Esophagus muscularis mucosa (tissue), 4 donors: ENCODE measurements at regions of chr7 and their contacts with region 1.

Region 1: DNA sequence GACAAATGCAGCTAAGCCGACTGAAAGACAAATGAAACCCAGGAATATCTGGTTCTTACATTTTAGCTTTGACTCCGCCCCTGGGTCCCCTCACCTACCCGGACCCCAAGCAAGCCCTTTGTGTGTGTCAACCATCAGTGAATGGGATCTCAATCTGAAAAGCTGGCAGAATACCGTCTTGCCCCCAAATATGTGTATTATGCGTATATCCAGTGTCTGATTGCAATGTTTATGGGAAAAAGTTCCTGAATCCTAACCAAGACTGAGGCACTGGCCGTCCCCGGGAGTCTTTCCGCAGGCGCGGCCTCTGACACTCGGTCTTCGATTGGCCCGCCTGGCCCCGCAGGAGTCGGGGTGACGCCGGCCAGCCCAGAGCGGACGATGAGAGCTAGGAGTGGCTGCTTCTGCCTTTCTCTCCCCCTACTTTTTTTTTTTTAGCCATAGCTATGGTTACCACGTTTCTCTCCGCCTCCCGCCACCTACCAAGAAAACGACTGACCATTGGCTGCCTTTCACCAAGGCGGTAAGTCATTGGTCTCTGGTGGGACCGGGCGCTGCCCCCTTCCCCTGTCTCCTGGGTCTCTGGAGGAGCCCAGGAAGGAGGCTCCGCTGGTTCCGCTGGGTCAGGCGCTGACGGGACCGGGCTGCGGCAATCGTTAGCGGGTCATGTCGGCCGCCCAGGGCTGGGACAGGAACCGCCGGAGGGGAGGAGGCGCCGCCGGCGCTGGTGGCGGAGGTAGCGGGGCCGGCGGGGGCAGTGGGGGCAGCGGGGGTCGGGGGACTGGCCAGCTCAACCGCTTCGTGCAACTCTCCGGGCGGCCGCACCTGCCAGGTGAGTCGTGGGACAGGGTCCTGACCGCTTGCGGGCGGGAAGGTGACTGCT is at the start of gene KLHDC10:
- DNase-seq: peak; percentile 99
- H3K4me3 ChIP-seq: peak within 1 kb of the TSS; percentile 76 to 99 (median 98)
- H3K27ac ChIP-seq: peak within 1 kb of the TSS; percentile 85 to 91 (median 89)
- H3K4me1 ChIP-seq: peaks cover 20 to 48% (median 42%) of the 10 kb centered on the region in 4 donors
- H3K27me3 ChIP-seq: no peaks in the 10 kb centered on the region
- CTCF ChIP-seq: peak in 1 of 3 experiments; percentile 38
- EP300 ChIP-seq: no peak
- POLR2A ChIP-seq: no peak
- total RNA-seq, gene KLHDC10: 19.1 to 23.6 (median 19.9) TPM

Region 2: DNA sequence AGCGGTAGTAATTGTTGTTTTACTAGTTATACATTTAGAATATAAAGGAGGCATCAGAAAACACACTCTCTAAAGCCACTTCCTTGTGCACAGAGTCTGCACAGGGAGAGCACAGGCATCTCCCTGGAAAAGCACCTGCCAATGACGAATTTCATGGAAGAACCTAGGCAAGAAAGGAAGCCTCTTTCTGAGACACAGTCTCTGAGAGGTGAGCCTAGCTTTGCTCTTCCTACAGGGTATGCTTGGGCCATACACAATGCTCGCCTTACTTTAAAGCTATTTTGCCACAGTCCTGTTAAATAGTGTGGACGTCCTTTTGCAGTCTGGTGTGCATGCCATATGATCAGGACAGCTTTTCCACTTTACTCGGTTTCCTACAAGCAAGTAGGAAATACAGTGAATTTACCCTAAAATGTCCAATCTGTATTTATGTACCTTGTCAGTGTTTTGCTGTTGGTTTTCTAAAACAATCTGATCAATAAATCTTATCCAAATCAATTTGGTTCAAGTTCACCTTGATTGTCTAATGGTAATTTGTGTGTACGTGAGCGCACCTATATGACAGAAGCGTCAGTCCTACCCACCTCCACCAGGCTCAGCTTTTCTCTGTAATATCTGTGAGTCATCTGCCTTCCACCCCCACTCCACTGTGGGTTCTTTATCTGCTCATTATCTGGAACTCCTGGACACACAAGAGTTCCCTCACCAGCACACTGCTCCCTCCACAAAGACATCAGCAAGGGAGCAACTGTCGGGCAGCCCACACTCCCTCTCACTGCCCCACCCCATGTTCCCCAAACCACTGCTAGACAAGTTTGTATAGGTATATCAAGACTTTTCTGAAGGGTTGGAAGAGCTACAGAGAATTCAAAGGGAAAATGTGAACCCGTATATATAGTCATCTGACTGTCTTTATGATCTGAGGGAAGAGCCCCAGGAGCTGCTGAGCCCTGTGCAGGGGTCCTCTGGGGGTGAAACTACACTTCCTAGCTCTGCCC is 65.3 kb after region 1 on chr7:
- intact Hi-C with region 1: no loop called
- DNase-seq: no peak
- H3K4me3 ChIP-seq: no peak overlapping the region
- H3K27ac ChIP-seq: no peak overlapping the region
- H3K4me1 ChIP-seq: peaks cover 0 to 5% (median 1%) of the 10 kb centered on the region in 4 donors
- H3K27me3 ChIP-seq: no peaks in the 10 kb centered on the region
- CTCF ChIP-seq: no peak
- EP300 ChIP-seq: no peak
- POLR2A ChIP-seq: no peak

Region 3: GRCh38 chr7:130440527-130441365 is 370.5 kb after region 1 on chr7 and contains the start of gene CEP41:
- intact Hi-C with region 1: loop called (anchors 5 kb)
- DNase-seq: peak; percentile 98
- H3K4me3 ChIP-seq: peak within 1 kb of the TSS; percentile 78 to 89 (median 80)
- H3K27ac ChIP-seq: peak within 1 kb of the TSS; percentile 81 to 87 (median 86)
- H3K4me1 ChIP-seq: peaks cover 7 to 19% (median 15%) of the 10 kb centered on the region in 4 donors
- H3K27me3 ChIP-seq: peaks cover 0 to 5% (median 0%) of the 10 kb centered on the region in 4 donors
- CTCF ChIP-seq: no peak
- EP300 ChIP-seq: no peak
- POLR2A ChIP-seq: no peak
- total RNA-seq, gene CEP41: 0.83 to 5.9 (median 2.8) TPM

Region 4: DNA sequence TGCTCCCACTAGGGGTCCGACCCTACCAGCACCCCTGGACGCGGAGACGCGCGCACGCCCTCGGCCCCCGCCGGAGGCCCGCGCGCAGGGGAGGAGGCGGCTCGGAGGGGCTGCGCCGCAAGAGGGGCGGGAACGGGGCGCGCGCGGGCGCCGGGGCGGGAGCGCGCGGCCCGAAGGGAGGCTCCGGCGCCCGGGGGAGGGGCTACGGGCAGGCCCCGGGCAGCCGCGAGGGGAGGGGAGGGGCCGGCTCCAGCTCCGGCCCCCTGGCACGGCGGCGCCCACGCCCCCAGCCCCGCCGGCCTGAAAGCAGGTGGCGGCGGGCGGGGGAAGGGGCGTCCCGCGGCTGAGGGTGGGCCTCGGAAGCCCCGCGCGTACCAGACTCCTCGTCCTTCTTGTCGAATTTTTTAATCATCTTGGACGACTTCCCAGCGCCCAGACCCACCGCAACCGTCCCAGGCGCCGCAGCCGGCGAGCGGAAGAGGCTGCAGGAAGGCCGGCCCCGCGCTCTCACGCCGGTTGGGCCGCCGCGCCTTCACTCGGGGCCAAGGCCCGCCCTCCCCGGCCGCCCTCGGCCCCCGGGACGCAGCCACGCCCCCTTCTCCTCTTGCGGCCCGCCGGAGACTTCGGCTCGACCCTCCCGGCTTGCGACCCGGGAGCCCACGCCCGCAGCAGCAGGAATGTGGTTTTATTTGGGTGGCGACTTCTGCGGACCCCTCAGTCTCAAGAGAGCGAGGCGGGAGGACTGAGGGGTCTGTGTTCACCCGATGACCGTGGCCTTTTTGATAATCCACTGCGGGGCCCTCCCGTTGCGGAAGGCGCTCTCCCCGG is 598.3 kb after region 1 on chr7 and contains the start of gene COPG2:
- intact Hi-C with region 1: loop called (anchors 10 kb)
- DNase-seq: peak; percentile 92
- H3K4me3 ChIP-seq: peak within 1 kb of the TSS; percentile 66 to 93 (median 82)
- H3K27ac ChIP-seq: peak within 1 kb of the TSS; percentile 80 to 86 (median 84)
- H3K4me1 ChIP-seq: peaks cover 0 to 18% (median 13%) of the 10 kb centered on the region in 4 donors
- H3K27me3 ChIP-seq: no peaks in the 10 kb centered on the region
- CTCF ChIP-seq: peak in 2 of 3 experiments; percentile 5 to 21
- EP300 ChIP-seq: no peak
- POLR2A ChIP-seq: no peak
- total RNA-seq, gene COPG2: 9.6 to 11.9 (median 10.7) TPM

Region 5: DNA sequence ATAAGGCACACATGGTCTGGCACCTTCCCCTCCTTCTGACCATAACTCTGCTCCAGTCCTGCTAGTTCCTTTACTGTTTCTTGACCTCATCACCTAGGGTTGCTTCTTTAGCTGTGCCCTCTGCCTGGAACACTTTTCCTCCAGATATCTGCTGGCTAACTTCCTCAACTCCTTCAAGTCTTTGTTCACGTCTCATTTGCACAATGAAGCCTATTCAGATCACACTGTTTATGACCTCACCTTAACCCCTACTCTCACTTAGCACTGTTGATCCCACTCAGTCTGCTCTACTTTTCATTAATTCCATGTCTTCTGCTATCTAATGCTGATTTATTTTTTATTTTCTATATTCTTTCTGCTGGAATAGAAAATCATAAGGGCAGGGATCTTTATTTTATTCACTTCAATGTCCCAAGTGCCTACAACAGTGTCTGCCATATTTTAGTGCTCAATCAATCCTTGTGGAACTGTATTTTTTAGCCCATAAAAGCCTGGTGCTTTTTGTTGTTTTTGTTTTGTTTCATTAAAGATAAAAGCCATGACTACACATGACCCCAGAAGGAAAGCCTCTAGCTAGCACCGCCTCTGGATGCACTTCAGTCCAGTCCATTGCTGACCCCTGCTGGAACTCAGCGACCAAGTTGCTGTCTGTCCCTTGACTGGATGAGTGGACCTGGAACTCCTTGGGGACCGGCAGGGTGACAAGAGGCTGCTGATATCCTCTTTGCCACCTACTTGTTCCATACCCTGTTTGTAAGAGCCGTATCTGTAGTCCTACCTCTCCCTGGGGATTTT is 651.5 kb after region 1 on chr7:
- intact Hi-C with region 1: loop called (anchors 10 kb)
- DNase-seq: no peak
- H3K4me3 ChIP-seq: no peak overlapping the region
- H3K27ac ChIP-seq: no peak overlapping the region
- H3K4me1 ChIP-seq: no peaks in the 10 kb centered on the region
- H3K27me3 ChIP-seq: peaks cover 0 to 12% (median 0%) of the 10 kb centered on the region in 4 donors
- CTCF ChIP-seq: peak in 2 of 3 experiments; percentile 46 to 54
- EP300 ChIP-seq: no peak
- POLR2A ChIP-seq: no peak